Heart left ventricle (tissue), 16 donors: ENCODE measurements at regions of chr10 and their contacts with region 1.

Region 1: GRCh38 chr10:75099952-75100763 is 11.3 kb upstream of the SAMD8 start:
- DNase-seq: peak; percentile 80 to 92 (median 80)
- ATAC-seq: peak; percentile 71 to 86 (median 82)
- H3K4me3 ChIP-seq: peak overlapping the region in 6 of 12 donors; percentile 2 to 37 (median 8)
- H3K27ac ChIP-seq: peak overlapping the region in 9 of 12 donors; percentile 28 to 83 (median 74)
- H3K4me1 ChIP-seq: peaks cover 0 to 29% (median 10%) of the 10 kb centered on the region in 12 donors
- H3K27me3 ChIP-seq: no peaks in the 10 kb centered on the region
- CTCF ChIP-seq: peak; percentile 93 to 100 (median 99)
- POLR2A ChIP-seq: no peak

Region 2: DNA sequence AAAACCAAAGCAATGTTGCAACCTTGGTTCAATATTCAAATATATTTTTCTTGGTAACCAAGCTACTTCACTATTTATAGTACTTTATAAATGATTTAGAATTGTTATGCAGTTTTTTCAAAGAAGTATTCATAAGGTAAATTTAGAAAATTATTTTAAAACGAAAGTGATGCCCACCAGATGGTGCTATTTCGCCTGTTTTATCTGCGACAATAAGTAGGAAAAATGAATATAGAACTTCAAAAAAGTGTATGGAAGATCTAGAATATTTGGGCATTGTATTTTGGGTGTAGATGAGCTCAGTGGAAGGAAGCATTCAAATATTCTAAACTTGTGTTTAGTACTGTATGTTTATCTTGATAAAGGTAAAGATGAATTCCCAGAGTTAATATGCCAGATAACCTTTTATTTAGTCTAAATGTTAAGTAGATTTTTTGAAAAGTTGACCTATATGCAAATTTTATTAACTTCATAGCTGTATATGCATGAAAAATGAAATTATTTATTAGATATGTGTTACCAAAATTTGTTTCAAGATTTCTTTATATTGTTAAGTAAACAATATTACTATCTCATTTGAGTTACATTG is 856.0 kb before region 1 on chr10:
- intact Hi-C with region 1: loop called in 5 of 10 experiments (anchors 1 to 5 kb)
- DNase-seq: no peak
- ATAC-seq: no peak
- H3K4me3 ChIP-seq: no peak overlapping the region
- H3K27ac ChIP-seq: no peak overlapping the region
- H3K4me1 ChIP-seq: no peaks in the 10 kb centered on the region
- H3K27me3 ChIP-seq: no peaks in the 10 kb centered on the region
- CTCF ChIP-seq: peak; percentile 34 to 68 (median 56)
- POLR2A ChIP-seq: no peak

Region 3: GRCh38 chr10:74419958-74420375 is 680.2 kb before region 1 on chr10:
- intact Hi-C with region 1: loop called in 1 of 10 experiments (anchors 10 kb)
- DNase-seq: no peak
- ATAC-seq: no peak
- H3K4me3 ChIP-seq: no peak overlapping the region
- H3K27ac ChIP-seq: no peak overlapping the region
- H3K4me1 ChIP-seq: peaks cover 0 to 8% (median 0%) of the 10 kb centered on the region in 12 donors
- H3K27me3 ChIP-seq: no peaks in the 10 kb centered on the region
- CTCF ChIP-seq: peak in 11 of 12 donors; percentile 19 to 51 (median 33)
- POLR2A ChIP-seq: no peak

Region 4: GRCh38 chr10:74662635-74663034 is 437.5 kb before region 1 on chr10:
- intact Hi-C with region 1: no loop called
- DNase-seq: no peak
- ATAC-seq: no peak
- H3K4me3 ChIP-seq: no peak overlapping the region
- H3K27ac ChIP-seq: no peak overlapping the region
- H3K4me1 ChIP-seq: no peaks in the 10 kb centered on the region
- H3K27me3 ChIP-seq: no peaks in the 10 kb centered on the region
- CTCF ChIP-seq: no peak
- POLR2A ChIP-seq: no peak

Region 5: GRCh38 chr10:74738985-74739567 is 361.1 kb before region 1 on chr10:
- intact Hi-C with region 1: loop called in 2 of 10 experiments (anchors 2 to 10 kb)
- DNase-seq: no peak
- ATAC-seq: peak in 2 of 4 donors; percentile 26 to 53
- H3K4me3 ChIP-seq: no peak overlapping the region
- H3K27ac ChIP-seq: no peak overlapping the region
- H3K4me1 ChIP-seq: peaks cover 0 to 10% (median 0%) of the 10 kb centered on the region in 12 donors
- H3K27me3 ChIP-seq: no peaks in the 10 kb centered on the region
- CTCF ChIP-seq: peak in 9 of 12 donors; percentile 19 to 42 (median 30)
- POLR2A ChIP-seq: no peak

Region 6: DNA sequence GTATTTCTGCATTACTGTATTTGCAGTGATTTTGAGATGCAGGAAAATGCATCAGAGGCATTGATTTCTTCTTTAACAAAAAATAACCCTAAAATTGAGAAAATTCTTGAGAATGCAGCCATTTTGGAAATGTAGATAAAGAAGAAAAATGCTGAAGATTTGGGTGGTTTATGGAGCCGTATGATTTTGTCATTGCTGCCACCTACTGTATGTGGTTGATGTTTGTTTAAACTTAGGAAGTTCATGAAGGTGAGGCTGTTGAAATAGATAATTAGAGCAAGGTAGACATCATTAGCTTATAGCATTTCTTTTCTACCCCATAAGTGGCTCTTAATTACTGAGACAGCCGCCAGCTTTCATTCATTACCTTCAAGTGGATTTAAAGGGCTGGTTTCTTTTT is 80.8 kb before region 1 on chr10:
- intact Hi-C with region 1: loop called in 1 of 10 experiments (anchors 5 kb)
- DNase-seq: no peak
- ATAC-seq: no peak
- H3K4me3 ChIP-seq: no peak overlapping the region
- H3K27ac ChIP-seq: no peak overlapping the region
- H3K4me1 ChIP-seq: peaks cover 0 to 35% (median 11%) of the 10 kb centered on the region in 12 donors
- H3K27me3 ChIP-seq: no peaks in the 10 kb centered on the region
- CTCF ChIP-seq: peak in 8 of 12 donors; percentile 19 to 49 (median 34)
- POLR2A ChIP-seq: no peak

Region 7: GRCh38 chr10:75235375-75236177 is 135.4 kb after region 1 on chr10 and contains the start of gene COMTD1:
- intact Hi-C with region 1: loop called in 3 of 10 experiments (anchors 5 to 10 kb)
- DNase-seq: peak; percentile 91 to 98 (median 95)
- ATAC-seq: peak; percentile 59 to 82 (median 81)
- H3K4me3 ChIP-seq: peak within 1 kb of the TSS; percentile 64 to 99 (median 81)
- H3K27ac ChIP-seq: peak within 1 kb of the TSS; percentile 66 to 93 (median 84)
- H3K4me1 ChIP-seq: peaks cover 0 to 30% (median 15%) of the 10 kb centered on the region in 12 donors
- H3K27me3 ChIP-seq: no peaks in the 10 kb centered on the region
- CTCF ChIP-seq: peak; percentile 100
- POLR2A ChIP-seq: peak in 1 of 2 donors; percentile 44
- total RNA-seq, gene COMTD1: 20.8 to 75.0 (median 37.0) TPM